Activated CD4-positive, alpha-beta memory T cell treated with anti-CD3 and anti-CD28 coated beads, Interleukin-2, amount 10 ng/mL, durations not matched to agents 7 days and 5 days (primary cell): ENCODE measurements at regions of chr14 and their contacts with region 1.

Region 1: GRCh38 chr14:24160850-24161804 is at the start of gene IRF9:
- DNase-seq: peak; percentile 99
- H3K4me3 Mint-ChIP-seq: peak within 1 kb of the TSS; percentile 100
- H3K27ac Mint-ChIP-seq: peak within 1 kb of the TSS; percentile 100
- H3K4me1 Mint-ChIP-seq: peaks cover 56% of the 10 kb centered on the region
- H3K27me3 Mint-ChIP-seq: no peaks in the 10 kb centered on the region
- total RNA-seq, gene IRF9: 262 to 267 TPM

Region 2: DNA sequence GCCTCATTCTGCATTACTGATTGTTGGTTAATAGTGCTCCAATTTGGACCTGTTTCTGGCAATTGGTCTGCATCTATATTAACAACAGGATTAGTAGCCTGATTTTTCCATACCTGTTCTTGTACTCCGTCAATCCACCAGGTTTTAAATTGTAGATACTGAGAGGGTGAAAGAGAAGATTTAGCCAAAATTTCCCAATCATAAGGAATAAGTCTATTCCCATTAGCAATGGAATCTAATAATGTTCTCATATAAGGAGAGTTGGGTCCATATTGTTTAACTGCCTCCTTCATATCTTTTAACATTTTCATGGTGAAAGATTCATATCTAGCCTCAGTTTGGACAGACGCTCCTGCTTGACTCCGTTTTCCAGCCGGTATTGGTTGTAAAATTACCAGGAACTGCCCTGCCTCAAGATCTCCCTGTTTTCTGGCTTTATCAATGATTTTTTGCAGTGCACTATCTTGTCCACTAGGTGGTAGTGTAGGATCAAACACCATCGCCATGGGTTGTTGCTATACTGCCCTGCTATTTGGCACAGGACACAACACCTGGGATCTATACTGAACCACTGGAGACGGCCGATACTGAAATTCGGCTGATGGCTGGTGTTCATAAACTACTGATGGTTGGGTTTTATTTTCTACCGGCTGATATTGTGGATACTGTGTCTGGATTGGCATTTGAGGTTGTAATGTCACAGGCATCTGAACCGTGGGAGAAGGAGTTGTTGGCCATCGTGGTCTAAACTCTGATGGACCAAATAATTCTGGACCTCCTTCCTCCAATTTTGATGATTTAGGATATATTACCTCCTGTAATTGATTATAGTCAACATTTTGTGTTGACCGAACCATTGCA is 147.2 kb before region 1 on chr14:
- CTCF ChIA-PET with region 1: no interaction called
- POLR2A ChIA-PET with region 1: no interaction called
- DNase-seq: peak; percentile 54
- H3K4me3 Mint-ChIP-seq: no peak overlapping the region
- H3K27ac Mint-ChIP-seq: no peak overlapping the region
- H3K4me1 Mint-ChIP-seq: peaks cover 29% of the 10 kb centered on the region
- H3K27me3 Mint-ChIP-seq: peaks cover 22% of the 10 kb centered on the region

Region 3: GRCh38 chr14:24093901-24094761 is 67.0 kb before region 1 on chr14 and contains the start of gene PCK2:
- CTCF ChIA-PET with region 1: interaction called, 31 read pairs
- POLR2A ChIA-PET with region 1: interaction called, 52 read pairs
- DNase-seq: peak; percentile 87
- H3K4me3 Mint-ChIP-seq: peak within 1 kb of the TSS; percentile 100
- H3K27ac Mint-ChIP-seq: peak within 1 kb of the TSS; percentile 96
- H3K4me1 Mint-ChIP-seq: peaks cover 38% of the 10 kb centered on the region
- H3K27me3 Mint-ChIP-seq: no peaks in the 10 kb centered on the region
- total RNA-seq, gene PCK2: 88.5 to 90.6 TPM

Region 4: DNA sequence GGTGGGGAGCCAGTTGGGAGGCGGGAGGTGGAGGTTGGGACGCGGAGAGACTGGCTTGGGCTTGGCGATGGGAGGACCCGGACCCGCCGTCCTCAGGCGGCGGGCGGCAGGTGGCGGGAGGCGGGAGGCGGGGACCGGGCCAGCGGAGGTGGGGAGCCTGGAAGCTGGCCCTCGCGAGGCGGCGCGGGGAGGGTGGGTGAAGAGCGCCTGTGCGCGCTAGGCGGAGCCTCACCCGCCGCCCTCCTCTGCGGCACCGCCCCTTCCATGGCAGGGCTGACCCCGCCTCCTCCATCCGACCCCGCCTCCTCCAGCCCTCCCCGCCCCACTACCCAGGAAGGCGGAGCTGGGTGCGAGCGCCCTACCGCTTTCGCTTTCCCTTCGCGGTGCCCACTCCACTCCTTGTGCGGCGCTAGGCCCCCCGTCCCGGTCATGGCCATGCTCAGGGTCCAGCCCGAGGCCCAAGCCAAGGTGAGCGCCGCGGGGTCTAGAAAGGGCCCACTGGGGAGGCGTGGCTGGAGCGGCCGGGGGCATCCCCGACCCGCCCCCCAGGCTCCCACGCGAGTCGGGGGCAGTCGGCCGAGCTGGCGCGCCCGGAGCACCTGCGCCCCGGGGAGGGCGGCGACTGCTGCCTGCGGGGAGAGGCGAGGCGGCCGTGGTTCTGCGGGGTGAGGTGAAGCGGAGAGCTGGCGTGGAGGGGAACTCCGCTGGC is 25.1 kb before region 1 on chr14 and contains the start of gene PSME1:
- CTCF ChIA-PET with region 1: interaction called, 32 read pairs
- POLR2A ChIA-PET with region 1: interaction called, 652 read pairs
- DNase-seq: peak; percentile 96
- H3K4me3 Mint-ChIP-seq: peak within 1 kb of the TSS; percentile 93
- H3K27ac Mint-ChIP-seq: peak within 1 kb of the TSS; percentile 89
- H3K4me1 Mint-ChIP-seq: peaks cover 53% of the 10 kb centered on the region
- H3K27me3 Mint-ChIP-seq: no peaks in the 10 kb centered on the region
- total RNA-seq, gene PSME1: 391 to 397 TPM

Region 5: DNA sequence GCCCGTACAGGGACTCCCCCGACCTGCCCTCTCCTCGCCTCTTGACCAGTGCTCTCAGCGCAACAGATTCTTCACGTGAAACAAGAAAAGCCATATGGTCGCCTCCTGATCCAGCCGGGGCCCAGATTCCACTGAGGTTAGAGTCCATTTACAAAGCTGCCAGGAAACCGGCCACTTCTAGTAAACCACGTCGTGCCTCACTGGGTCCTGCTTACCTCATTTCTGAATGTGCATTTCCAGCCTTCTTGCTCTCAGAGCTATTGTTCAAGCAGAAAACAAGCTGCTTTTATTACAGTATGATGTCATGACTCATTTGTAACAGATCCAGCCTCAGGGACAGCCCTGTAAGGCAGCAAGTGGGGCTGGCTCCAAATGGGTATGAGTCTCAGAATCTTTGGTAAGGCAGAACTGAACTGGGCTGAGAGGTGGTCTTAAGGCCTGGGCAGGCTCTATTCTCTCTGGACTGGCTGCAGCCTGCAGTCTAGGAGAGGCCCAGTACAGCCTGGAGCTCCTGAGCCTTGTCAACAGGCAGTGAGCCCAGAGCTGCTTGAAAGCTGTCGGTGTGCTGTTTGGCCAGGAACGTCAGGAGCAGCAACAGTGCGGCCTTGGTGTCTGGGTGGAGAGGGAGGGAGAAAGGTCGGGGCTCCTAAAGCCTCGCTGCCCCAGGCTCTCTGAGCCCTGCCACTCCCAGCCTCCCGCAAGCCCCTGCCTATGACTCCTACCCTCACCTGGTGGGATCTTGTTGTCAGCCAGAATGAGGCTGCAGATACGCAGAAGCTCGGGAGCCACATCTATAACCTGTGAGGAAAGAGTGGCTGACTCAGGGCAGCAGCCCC is 19.1 kb after region 1 on chr14:
- CTCF ChIA-PET with region 1: interaction called, 10 read pairs
- POLR2A ChIA-PET with region 1: interaction called, 456 read pairs
- DNase-seq: no peak
- H3K4me3 Mint-ChIP-seq: no peak overlapping the region
- H3K27ac Mint-ChIP-seq: no peak overlapping the region
- H3K4me1 Mint-ChIP-seq: peaks cover 3% of the 10 kb centered on the region
- H3K27me3 Mint-ChIP-seq: no peaks in the 10 kb centered on the region

Region 6: DNA sequence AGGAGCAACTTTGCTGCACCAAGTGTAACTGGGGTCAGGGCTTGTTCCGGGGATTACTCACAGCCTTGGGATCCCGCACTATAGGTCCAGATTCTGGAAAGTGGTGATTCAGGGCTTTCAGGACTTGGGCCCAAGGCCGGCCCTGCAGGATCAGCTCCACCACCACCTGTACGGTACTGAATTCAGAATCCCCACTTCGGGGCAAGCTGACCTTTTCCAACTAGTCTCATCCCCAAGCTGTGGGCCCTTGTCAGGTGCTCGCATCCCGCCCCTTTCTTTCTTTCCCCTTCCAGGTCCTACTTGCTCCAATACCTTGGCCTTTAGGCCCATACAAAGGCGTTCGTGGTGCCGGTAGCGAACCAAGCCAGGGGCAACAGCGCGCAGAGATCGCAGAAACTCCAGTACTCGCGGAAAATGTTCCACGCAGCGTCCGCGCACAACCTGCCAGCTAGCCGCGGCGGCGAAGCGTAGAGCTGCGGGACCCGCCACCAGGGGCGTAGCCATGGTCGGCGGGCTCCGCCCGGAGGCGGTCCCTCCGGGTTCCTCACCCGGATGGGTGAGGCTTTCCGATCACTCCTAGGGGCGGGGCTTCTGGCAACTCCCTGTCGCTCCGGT is 80.8 kb after region 1 on chr14:
- CTCF ChIA-PET with region 1: interaction called, 26 read pairs
- POLR2A ChIA-PET with region 1: interaction called, 39 read pairs
- DNase-seq: peak; percentile 94
- H3K4me3 Mint-ChIP-seq: peak overlapping the region; percentile 89
- H3K27ac Mint-ChIP-seq: peak overlapping the region; percentile 96
- H3K4me1 Mint-ChIP-seq: peaks cover 61% of the 10 kb centered on the region
- H3K27me3 Mint-ChIP-seq: no peaks in the 10 kb centered on the region

Region 7: DNA sequence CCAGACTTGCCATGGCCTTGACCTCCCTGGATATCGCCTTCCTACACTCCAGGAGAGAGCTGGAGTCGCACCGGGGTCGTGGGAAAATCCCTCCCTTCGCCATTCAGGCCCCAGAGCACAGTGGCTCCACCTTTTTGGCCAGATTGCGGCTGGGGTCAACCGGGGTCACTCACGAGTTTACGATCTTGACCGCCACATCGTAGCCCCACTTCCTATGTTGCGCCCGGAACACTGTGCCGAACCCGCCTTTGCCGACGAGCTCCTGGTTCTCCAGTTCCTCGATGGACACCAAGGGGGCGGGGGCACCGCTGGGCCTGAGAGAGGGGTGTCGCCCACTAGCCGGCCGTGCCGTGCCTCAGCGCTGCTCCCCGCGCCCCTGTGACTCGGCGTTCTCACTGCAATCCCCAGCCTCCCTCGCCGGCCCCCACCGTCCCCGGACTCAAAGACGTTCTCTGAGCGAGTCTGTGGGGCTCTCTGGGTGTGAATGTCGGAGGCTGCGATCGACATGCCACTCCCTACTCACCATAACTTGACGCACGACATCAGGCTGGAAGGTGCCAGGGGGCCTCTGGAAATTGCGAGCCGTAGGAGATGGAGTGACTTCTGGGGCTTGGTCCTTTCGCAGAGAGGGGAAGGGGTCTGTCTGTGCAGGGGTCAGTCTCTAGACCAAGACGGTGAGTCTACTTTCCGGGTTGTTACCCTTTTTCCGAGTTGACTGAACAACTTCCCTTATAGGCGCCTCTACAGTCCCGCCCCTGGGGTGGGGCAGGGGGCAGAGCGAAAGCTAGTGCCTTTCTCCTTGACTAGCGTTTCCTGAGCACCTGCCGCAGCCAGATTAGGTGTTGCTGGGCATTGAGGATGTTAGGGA is 178.4 kb after region 1 on chr14 and contains the start of gene RIPK3:
- CTCF ChIA-PET with region 1: no interaction called
- POLR2A ChIA-PET with region 1: no interaction called
- DNase-seq: peak; percentile 82
- H3K4me3 Mint-ChIP-seq: peak within 1 kb of the TSS; percentile 97
- H3K27ac Mint-ChIP-seq: peak within 1 kb of the TSS; percentile 83
- H3K4me1 Mint-ChIP-seq: peaks cover 42% of the 10 kb centered on the region
- H3K27me3 Mint-ChIP-seq: peaks cover 31% of the 10 kb centered on the region
- total RNA-seq, gene RIPK3: 37.3 to 38.0 TPM

Region 8: DNA sequence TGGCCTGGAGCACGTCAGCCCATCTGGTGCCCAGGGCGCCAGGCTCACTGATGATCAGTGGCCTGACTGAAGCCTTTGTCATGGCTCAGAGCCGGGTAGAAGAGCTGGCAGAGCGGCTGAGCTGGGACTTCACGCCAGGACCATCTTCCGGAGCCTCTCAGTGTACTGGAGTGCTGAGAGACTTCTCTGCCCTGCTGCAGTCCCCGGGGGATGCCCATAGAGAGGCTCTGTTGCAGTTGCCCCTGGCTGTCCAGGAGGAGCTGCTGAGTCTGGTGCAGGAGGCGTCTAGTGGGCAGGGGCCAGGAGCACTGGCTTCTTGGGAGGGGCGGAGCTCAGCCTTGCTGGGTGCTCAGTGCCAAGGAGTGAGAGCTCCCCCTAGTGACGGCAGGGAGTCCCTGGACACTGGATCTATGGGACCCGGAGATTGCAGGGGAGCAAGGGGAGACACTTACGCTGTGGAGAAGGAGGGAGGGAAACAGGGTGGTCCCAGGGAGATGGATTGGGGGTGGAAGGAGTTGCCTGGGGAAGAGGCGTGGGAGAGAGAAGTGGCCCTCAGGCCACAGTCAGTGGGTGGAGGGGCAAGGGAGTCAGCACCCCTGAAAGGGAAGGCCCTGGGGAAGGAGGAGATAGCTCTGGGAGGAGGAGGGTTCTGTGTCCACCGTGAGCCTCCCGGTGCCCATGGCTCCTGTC is 270.6 kb after region 1 on chr14:
- CTCF ChIA-PET with region 1: interaction called, 5 read pairs
- POLR2A ChIA-PET with region 1: interaction called, 25 read pairs
- DNase-seq: peak; percentile 92
- H3K4me3 Mint-ChIP-seq: peak overlapping the region; percentile 92
- H3K27ac Mint-ChIP-seq: peak overlapping the region; percentile 92
- H3K4me1 Mint-ChIP-seq: peaks cover 60% of the 10 kb centered on the region
- H3K27me3 Mint-ChIP-seq: no peaks in the 10 kb centered on the region

Region 9: DNA sequence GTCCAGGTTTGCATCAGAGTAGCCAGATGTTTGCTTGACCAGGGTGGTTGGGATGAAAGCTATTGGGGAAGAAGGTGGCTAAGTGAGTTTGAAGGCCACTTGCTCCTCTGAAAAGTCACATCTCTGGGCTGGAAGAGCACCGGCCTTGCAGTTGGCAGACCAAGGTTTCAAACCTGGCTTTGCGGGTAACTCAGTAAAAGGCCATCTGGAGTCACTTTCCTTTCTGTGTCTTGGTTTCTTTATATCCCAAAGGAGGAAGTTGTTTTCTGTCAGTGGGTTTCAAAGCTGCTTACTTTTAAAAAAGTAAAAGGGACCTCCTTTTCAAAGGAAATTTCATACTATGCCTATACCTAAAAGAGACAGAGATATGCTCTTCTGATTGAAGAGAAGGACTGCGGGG is 373.2 kb after region 1 on chr14:
- CTCF ChIA-PET with region 1: no interaction called
- POLR2A ChIA-PET with region 1: no interaction called
- DNase-seq: no peak
- H3K4me3 Mint-ChIP-seq: no peak overlapping the region
- H3K27ac Mint-ChIP-seq: no peak overlapping the region
- H3K4me1 Mint-ChIP-seq: no peaks in the 10 kb centered on the region
- H3K27me3 Mint-ChIP-seq: peaks cover 9% of the 10 kb centered on the region